Activated CD4-positive, alpha-beta memory T cell treated with anti-CD3 and anti-CD28 coated beads for 36 hours (primary cell): ENCODE measurements at regions of chr20 and their contacts with region 1.

Region 1: DNA sequence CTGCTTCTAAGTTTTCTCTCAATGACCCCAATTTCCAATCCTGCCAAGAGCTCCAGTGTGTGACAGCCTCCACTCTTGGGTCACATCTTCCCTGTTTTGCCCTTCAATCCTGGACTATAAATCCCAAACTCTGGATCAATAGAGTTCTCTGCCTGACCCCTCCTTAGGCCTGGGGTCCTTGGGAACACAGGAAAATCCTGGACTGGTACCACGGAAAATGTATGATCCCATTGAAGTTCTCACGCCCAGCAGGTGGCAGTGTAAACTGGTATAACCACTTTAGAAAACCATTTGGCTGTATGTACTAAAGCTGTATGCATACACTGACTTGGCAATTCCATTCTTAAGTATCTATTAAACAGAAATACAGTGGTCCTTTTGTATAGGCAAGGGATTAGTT is 98.0 kb downstream of the SNAP25 start:
- DNase-seq: peak; percentile 32
- H3K4me3 Mint-ChIP-seq: no peak overlapping the region
- H3K27ac Mint-ChIP-seq: no peak overlapping the region
- H3K4me1 Mint-ChIP-seq: peaks cover 4% of the 10 kb centered on the region
- H3K27me3 Mint-ChIP-seq: peaks cover 10% of the 10 kb centered on the region

Region 2: DNA sequence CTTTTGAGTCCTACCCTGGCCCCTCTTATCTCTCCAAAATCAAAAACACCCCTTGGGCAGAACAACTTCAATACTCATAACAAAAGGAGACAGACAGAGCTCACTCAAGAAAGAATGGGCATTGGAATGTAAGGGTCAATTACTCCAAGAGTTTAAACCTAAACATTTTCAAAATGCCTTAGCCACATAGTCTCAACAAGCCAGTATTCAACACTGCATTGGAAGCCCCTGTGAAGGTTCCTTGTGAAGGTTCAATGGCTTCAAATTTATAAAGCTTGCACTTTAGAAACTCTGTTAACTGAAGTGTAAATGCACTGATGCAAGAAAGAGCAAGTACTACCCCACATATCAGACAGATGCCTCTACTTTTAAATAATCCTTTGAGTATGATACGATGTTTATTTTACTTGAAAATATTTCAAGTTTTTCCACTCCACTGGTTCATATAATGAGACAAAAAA is 941.3 kb before region 1 on chr20:
- CTCF ChIA-PET with region 1: no interaction called
- POLR2A ChIA-PET with region 1: no interaction called
- intact Hi-C with region 1: no loop called
- DNase-seq: no peak
- H3K4me3 Mint-ChIP-seq: no peak overlapping the region
- H3K27ac Mint-ChIP-seq: no peak overlapping the region
- H3K4me1 Mint-ChIP-seq: no peaks in the 10 kb centered on the region
- H3K27me3 Mint-ChIP-seq: no peaks in the 10 kb centered on the region

Region 3: DNA sequence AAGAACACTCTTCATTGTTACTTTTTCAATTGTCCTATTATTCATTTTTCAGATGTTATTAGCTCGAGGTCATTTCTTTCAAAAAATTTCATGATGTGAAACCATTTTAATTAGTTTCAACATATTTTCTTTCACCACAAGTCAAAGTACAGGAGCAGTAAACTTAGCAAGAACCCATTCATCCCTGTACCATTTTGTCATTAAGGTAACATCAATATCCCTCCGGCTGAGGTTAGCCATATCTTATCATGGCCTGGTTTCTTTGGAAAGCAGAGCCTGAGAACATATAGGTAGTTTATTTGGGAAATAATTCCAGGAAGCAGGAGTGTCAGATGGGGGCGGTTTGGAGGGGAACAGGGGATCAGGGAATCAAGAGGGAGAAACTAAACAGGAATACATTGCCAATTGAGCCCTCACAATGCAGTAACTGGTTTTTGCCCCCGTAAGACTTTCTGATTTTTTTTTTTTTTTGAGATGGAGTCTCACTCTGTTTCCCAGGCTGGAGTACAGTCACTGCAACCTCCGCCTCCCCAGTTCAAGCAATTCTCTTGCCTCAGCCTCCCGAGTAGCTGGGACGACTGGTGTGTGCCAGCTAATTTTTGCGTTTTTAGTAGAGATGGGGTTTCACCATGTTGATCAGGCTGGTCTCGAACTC is 33.7 kb after region 1 on chr20:
- CTCF ChIA-PET with region 1: interaction called, 8 read pairs
- POLR2A ChIA-PET with region 1: interaction called, 3 read pairs
- intact Hi-C with region 1: loop called (anchors 2 kb)
- DNase-seq: no peak
- H3K4me3 Mint-ChIP-seq: no peak overlapping the region
- H3K27ac Mint-ChIP-seq: peak overlapping the region; percentile 75
- H3K4me1 Mint-ChIP-seq: peaks cover 30% of the 10 kb centered on the region
- H3K27me3 Mint-ChIP-seq: no peaks in the 10 kb centered on the region

Region 4: GRCh38 chr20:10357974-10358373 is 41.4 kb after region 1 on chr20:
- CTCF ChIA-PET with region 1: interaction called, 11 read pairs
- POLR2A ChIA-PET with region 1: no interaction called
- intact Hi-C with region 1: loop called (anchors 2 kb)
- DNase-seq: no peak
- H3K4me3 Mint-ChIP-seq: no peak overlapping the region
- H3K27ac Mint-ChIP-seq: no peak overlapping the region
- H3K4me1 Mint-ChIP-seq: peaks cover 5% of the 10 kb centered on the region
- H3K27me3 Mint-ChIP-seq: no peaks in the 10 kb centered on the region

Region 5: DNA sequence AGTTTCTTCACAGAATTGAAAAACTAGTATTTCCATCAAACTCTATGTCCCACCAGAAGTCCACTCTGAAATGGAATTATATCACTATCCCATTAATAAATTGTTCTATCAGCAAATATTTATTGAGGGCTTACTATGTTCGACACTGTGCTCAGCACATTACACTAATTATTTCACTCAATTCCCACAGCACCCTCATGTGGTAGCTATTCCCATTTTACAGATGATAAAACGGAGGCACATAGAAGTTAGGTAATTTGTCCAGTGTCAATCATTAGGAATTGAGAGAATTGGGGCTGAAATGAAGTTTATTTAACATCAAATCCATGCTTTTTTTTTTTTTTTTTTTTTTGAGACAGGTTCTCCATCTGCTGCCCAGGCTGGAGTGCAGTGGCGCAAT is 64.9 kb after region 1 on chr20:
- CTCF ChIA-PET with region 1: interaction called, 11 read pairs
- POLR2A ChIA-PET with region 1: no interaction called
- intact Hi-C with region 1: loop called (anchors 1 kb)
- DNase-seq: no peak
- H3K4me3 Mint-ChIP-seq: no peak overlapping the region
- H3K27ac Mint-ChIP-seq: no peak overlapping the region
- H3K4me1 Mint-ChIP-seq: peaks cover 4% of the 10 kb centered on the region
- H3K27me3 Mint-ChIP-seq: peaks cover 7% of the 10 kb centered on the region

Region 6: GRCh38 chr20:10427060-10427692 is 110.6 kb after region 1 on chr20:
- CTCF ChIA-PET with region 1: interaction called, 32 read pairs
- POLR2A ChIA-PET with region 1: no interaction called
- intact Hi-C with region 1: loop called (anchors 1 kb)
- DNase-seq: peak; percentile 50
- H3K4me3 Mint-ChIP-seq: no peak overlapping the region
- H3K27ac Mint-ChIP-seq: no peak overlapping the region
- H3K4me1 Mint-ChIP-seq: peaks cover 34% of the 10 kb centered on the region
- H3K27me3 Mint-ChIP-seq: no peaks in the 10 kb centered on the region

Region 7: DNA sequence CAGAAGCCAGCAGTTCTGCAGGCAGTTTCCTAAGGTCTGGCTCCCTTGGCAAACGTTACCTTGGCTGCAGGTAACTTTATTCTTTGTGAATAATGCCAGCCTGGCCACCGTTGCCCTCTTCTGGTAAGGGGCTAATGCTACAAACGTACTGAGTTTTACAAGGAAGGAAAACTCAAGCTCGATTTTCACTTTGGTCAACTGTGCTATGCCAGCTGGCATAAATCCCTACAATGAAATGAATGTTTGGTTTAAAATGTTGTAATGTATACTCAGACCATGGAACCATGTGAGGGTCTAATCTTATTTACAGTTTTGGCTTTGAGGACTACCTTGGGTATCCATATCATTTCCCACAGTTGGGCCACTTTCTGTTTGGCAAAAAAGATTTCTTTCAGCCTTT is 219.9 kb after region 1 on chr20:
- CTCF ChIA-PET with region 1: interaction called, 12 read pairs
- POLR2A ChIA-PET with region 1: no interaction called
- intact Hi-C with region 1: no loop called
- DNase-seq: peak; percentile 42
- H3K4me3 Mint-ChIP-seq: no peak overlapping the region
- H3K27ac Mint-ChIP-seq: no peak overlapping the region
- H3K4me1 Mint-ChIP-seq: peaks cover 10% of the 10 kb centered on the region
- H3K27me3 Mint-ChIP-seq: no peaks in the 10 kb centered on the region